Right lobe of liver (tissue), 6 donors: ENCODE measurements at regions of chr12 and their contacts with region 1.

Region 1: GRCh38 chr12:120944645-120945231 is 33.6 kb upstream of the HNF1A start:
- DNase-seq: peak in 2 of 3 donors; percentile 62 to 64
- ATAC-seq: peak; percentile 80 to 88 (median 84)
- H3K4me3 ChIP-seq: no peak overlapping the region
- H3K27ac ChIP-seq: no peak overlapping the region
- H3K4me1 ChIP-seq: no peaks in the 10 kb centered on the region
- H3K27me3 ChIP-seq: no peaks in the 10 kb centered on the region
- CTCF ChIP-seq: peak; percentile 72 to 81 (median 74)
- POLR2A ChIP-seq: no peak

Region 2: DNA sequence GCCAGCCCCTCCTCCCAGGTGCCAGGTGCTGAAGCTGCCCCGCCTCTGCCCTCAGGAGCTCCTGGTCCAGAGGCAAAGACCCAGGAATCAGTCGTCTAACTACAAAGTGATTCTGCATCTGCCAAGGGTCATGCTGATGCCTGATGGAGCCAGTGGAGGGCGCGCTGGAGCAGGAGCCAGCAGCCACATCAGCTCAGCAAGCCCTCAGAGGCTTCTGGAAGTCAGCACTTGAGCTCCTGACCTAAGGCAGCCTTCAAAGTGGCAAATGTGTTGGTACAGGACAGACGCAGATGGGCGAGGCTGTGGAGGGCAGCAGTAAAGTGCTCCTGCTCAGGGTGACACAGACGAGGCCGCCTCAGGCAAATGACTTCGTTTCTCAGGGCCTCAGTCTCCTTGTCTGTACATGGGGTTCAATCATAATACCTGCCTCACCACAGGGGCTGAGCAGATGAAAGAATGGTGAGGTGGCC is 60.6 kb after region 1 on chr12:
- intact Hi-C with region 1: loop called in 1 of 2 experiments (anchors 5 kb)
- DNase-seq: no peak
- ATAC-seq: peak; percentile 62 to 71 (median 66)
- H3K4me3 ChIP-seq: no peak overlapping the region
- H3K27ac ChIP-seq: no peak overlapping the region
- H3K4me1 ChIP-seq: peaks cover 0 to 3% (median 0%) of the 10 kb centered on the region in 4 donors
- H3K27me3 ChIP-seq: no peaks in the 10 kb centered on the region
- CTCF ChIP-seq: peak; percentile 50 to 67 (median 57)
- POLR2A ChIP-seq: no peak

Region 3: GRCh38 chr12:121452340-121452984 is 507.7 kb after region 1 on chr12:
- intact Hi-C with region 1: no loop called
- DNase-seq: peak in 2 of 3 donors; percentile 47 to 59
- ATAC-seq: peak; percentile 19 to 47 (median 36)
- H3K4me3 ChIP-seq: peak overlapping the region in 1 of 3 donors; percentile 4
- H3K27ac ChIP-seq: no peak overlapping the region
- H3K4me1 ChIP-seq: no peaks in the 10 kb centered on the region
- H3K27me3 ChIP-seq: no peaks in the 10 kb centered on the region
- CTCF ChIP-seq: no peak
- POLR2A ChIP-seq: no peak